Left ventricle myocardium inferior (tissue), 1 donor: ENCODE measurements at regions of chr12 and their contacts with region 1.

Region 1: GRCh38 chr12:54751493-54751892 is 102.8 kb upstream of the MUCL1 start:
- DNase-seq: no peak
- H3K4me3 ChIP-seq: no peak overlapping the region
- H3K27ac ChIP-seq: no peak overlapping the region
- H3K4me1 ChIP-seq: no peaks in the 10 kb centered on the region
- H3K27me3 ChIP-seq: peaks cover 25% of the 10 kb centered on the region
- CTCF ChIP-seq: no peak

Region 2: DNA sequence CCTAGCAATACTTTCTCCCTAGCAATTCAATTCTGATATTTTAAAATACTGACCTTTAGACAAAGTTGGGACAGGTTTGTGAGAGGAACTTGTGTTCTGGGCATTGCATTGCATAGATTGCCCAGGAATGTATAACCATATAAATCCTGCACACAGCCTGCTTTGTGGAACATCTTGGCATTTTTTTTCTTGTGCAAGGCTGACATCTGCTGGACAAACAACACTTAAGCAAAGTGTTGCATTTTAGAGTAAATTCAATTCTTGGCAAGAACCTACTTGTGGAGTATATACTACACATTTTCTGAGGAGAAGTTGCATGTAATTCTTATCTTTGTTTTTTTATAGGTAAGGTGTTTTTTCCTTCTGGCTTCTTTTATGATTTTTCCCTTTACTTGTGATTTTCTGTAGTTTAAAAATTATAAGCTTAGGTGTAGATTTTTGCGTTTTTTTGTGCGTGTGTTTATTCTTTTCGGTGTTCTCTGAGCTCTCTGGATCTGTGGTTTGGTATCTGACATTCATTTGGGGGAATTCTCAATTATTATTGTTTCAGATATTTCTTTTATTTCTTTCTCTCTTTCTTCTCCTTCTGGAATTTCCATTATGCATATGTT is 206.7 kb after region 1 on chr12:
- intact Hi-C with region 1: loop called (anchors 5 kb)
- DNase-seq: no peak
- H3K4me3 ChIP-seq: no peak overlapping the region
- H3K27ac ChIP-seq: no peak overlapping the region
- H3K4me1 ChIP-seq: no peaks in the 10 kb centered on the region
- H3K27me3 ChIP-seq: peaks cover 72% of the 10 kb centered on the region
- CTCF ChIP-seq: peak; percentile 74

Region 3: DNA sequence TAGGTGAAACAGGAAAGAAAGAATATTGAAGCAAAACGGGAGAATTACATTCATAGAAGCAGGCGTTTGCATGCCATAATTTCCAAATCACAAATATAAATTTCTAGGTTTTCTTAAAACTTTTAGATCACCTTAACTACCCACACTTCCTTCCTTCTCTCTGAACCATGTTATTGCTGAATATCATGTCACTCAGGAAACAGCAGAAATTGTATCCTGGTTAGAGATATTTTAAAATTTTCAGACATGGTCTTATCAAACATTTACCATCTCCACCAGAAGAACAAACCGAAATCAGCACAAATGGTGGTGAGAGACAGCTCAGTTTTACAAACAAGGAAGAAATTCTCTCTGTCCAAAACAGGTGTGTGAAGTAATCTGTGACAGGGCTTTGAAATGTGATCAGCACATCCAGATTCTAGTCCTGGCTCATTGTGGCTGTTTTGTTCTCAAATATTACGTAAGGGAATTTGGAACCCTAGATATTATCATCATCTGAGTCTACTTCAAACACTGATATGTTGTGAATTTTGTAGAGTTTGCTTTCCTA is 216.8 kb after region 1 on chr12:
- intact Hi-C with region 1: no loop called
- DNase-seq: no peak
- H3K4me3 ChIP-seq: no peak overlapping the region
- H3K27ac ChIP-seq: no peak overlapping the region
- H3K4me1 ChIP-seq: peaks cover under 1% of the 10 kb centered on the region
- H3K27me3 ChIP-seq: peaks cover 45% of the 10 kb centered on the region
- CTCF ChIP-seq: no peak